HepG2 (cell line): ENCODE measurements at regions of chr5 and their contacts with region 1.

Region 1: GRCh38 chr5:150758531-150759333 is at the start of gene DCTN4:
- DNase-seq: peak; percentile 99
- ATAC-seq: peak; percentile 98
- H3K4me3 ChIP-seq: peak within 1 kb of the TSS; percentile 84 to 93 (median 86)
- H3K27ac ChIP-seq: peak within 1 kb of the TSS; percentile 93
- H3K4me1 ChIP-seq: peaks cover 63% of the 10 kb centered on the region
- H3K27me3 ChIP-seq: no peaks in the 10 kb centered on the region
- CTCF ChIP-seq: peak; percentile 40; the same call in 1 of the 2 replicates
- EP300 ChIP-seq: no peak
- POLR2A ChIP-seq: peak; percentile 76 to 77
- RAD21 ChIP-seq: peak; percentile 44; the same call in 1 of the 2 replicates
- total RNA-seq, gene DCTN4: 26.9 and 39.7 TPM in 2 replicates

Region 2: GRCh38 chr5:150700594-150701293 is 58.0 kb before region 1 on chr5 and contains the start of gene RBM22:
- CTCF ChIA-PET with region 1: no interaction called
- POLR2A ChIA-PET with region 1: interaction called, 23 read pairs
- in situ Hi-C with region 1: no loop called
- intact Hi-C with region 1: loop called (anchors 1 kb)
- DNase-seq: peak; percentile 77
- ATAC-seq: peak; percentile 97
- H3K4me3 ChIP-seq: peak within 1 kb of the TSS; percentile 97 to 100 (median 99)
- H3K27ac ChIP-seq: peak within 1 kb of the TSS; percentile 84
- H3K4me1 ChIP-seq: peaks cover 21% of the 10 kb centered on the region
- H3K27me3 ChIP-seq: no peaks in the 10 kb centered on the region; a peak in 1 of 5 replicates
- CTCF ChIP-seq: peak; percentile 72
- EP300 ChIP-seq: 0 out of 4 replicates have a peak, but pooled peaks of 1 of the 2 experiments have one; percentile 19
- POLR2A ChIP-seq: peak; percentile 73 to 85
- RAD21 ChIP-seq: peak; percentile 7; the same call in 1 of the 2 replicates
- total RNA-seq, gene RBM22: 27.7 and 28.3 TPM in 2 replicates

Region 3: DNA sequence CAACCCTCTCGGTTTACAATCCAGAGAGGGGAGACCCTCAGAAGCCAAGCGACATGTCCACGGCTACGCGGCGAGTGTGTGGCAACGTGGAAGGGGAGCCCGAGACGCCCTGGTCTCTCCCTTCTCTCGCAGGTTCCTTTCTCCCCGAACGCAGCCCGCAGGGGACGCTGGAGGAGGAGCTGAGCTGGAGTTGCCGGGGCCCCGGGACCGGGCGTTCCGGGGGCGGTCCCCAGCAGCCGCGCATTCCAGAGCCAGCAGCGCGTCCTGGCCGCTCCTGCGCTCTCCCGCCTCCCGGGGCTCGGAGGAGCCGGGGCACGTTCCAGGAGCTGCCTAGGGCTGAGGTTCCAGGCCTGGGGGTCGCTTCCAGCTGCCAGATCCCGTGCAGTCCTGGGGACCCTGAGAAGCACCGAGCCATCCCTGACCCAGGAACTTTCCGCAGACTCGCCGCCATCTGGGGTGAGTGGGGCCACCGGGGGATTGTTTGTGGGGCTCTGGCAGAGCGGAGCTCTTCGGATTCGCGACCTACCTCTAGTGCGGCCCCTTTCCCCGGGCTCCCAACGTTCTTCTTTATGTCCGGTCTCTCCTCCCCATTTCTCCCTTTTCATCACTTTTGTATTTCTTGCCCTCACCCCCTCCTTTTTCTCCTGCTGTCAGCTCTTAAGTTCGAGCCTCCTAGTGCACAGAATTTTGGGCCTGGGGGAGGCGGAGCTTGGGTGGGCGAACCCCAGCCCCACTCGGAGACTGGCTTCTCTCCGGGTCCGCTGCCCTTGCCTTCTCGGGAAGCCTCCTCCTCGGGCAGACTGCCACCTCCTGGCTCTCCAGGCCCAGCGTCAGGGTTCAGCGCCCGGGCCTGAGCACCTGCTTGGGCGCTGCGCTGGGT is 20.0 kb after region 1 on chr5 and contains the start of gene SMIM3:
- CTCF ChIA-PET with region 1: no interaction called
- POLR2A ChIA-PET with region 1: interaction called, 25 read pairs
- in situ Hi-C with region 1: no loop called
- intact Hi-C with region 1: loop called (anchors 1 kb)
- DNase-seq: peak; percentile 47
- ATAC-seq: peak; percentile 87
- H3K4me3 ChIP-seq: peak within 1 kb of the TSS; percentile 74 to 90 (median 79)
- H3K27ac ChIP-seq: peak within 1 kb of the TSS; percentile 51
- H3K4me1 ChIP-seq: peaks cover 59% of the 10 kb centered on the region
- H3K27me3 ChIP-seq: no peaks in the 10 kb centered on the region; a peak in 1 of 5 replicates
- CTCF ChIP-seq: peak; percentile 84
- EP300 ChIP-seq: no peak
- POLR2A ChIP-seq: peak in 1 of 2 experiments; percentile 77; a peak in 2 of 4 replicates
- RAD21 ChIP-seq: peak; percentile 53
- total RNA-seq, gene SMIM3: 11.6 and 14.1 TPM in 2 replicates